H1 (cell line): ENCODE measurements at regions of chr13 and their contacts with region 1.

Region 1: DNA sequence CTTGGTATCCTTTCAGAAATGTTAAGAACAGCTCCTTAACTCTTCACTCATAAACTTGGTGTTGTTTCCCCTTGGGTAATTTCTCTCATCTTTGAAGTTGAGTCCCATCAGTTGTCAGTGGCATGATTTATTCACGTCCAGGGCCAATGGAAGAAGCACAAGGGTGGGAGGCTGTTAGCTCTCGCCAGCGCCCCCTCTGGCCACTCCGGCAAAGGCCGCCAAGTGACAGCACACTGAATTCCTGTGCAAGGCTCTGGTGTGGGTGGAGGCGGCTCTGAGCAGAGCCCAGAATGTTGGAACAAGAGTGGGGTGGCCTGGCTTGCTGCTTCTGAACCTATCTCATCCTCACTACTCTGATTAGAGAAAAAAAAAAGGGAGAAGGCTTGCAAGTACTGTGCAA is 13.1 kb upstream of the MEDAG start:
- DNase-seq: peak in 1 of 2 experiments; percentile 94
- H3K4me3 ChIP-seq: no peak overlapping the region
- H3K27ac ChIP-seq: no peak overlapping the region
- H3K4me1 ChIP-seq: peaks cover 0 to 3% (median 0%) of the 10 kb centered on the region in 4 experiments; a peak in 1 of 7 replicates
- H3K27me3 ChIP-seq: no peaks in the 10 kb centered on the region
- CTCF ChIP-seq: peak; percentile 75 to 94 (median 93)
- EP300 ChIP-seq: no peak
- POLR2A ChIP-seq: no peak
- RAD21 ChIP-seq: peak; percentile 47 to 59

Region 2: GRCh38 chr13:30880151-30880855 is 12.7 kb before region 1 on chr13:
- CTCF ChIA-PET with region 1: interaction called, 11 read pairs
- POLR2A ChIA-PET with region 1: no interaction called
- DNase-seq: no peak
- H3K4me3 ChIP-seq: no peak overlapping the region
- H3K27ac ChIP-seq: no peak overlapping the region
- H3K4me1 ChIP-seq: peaks cover 0 to 4% (median 0%) of the 10 kb centered on the region in 4 experiments; a peak in 1 of 7 replicates
- H3K27me3 ChIP-seq: no peaks in the 10 kb centered on the region
- CTCF ChIP-seq: no peak
- EP300 ChIP-seq: no peak
- POLR2A ChIP-seq: no peak
- RAD21 ChIP-seq: no peak

Region 3: DNA sequence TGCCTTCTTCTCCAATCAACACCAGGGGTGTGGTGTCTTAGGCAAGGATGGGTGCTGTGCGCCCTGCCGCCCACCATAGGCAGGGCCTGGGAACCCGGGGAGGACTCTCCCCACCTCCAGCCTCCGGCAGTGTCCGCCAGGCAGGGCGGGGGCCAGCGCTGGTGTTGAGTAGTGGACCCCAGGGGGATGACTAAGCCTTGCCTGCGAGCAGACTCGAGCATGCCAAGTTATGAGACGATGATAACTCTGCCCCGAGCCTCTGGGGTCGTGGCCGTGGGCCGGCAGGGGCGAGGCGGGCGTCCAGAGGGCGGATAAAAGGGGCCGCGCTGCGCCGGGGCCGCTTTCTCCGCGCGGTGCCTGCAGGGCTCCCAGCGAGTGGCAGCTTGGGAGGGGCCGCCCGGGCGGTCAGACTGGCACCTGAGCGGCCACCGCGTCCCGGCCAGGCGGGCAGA is 13.0 kb after region 1 on chr13 and contains the start of gene MEDAG:
- CTCF ChIA-PET with region 1: interaction called, 17 read pairs
- POLR2A ChIA-PET with region 1: no interaction called
- DNase-seq: no peak
- H3K4me3 ChIP-seq: peak within 1 kb of the TSS in 2 of 4 experiments; percentile 28 to 42; a peak in 3 of 8 replicates
- H3K27ac ChIP-seq: no peak within 1 kb of the TSS
- H3K4me1 ChIP-seq: no peaks in the 10 kb centered on the region
- H3K27me3 ChIP-seq: peaks cover 0 to 14% (median 1%) of the 10 kb centered on the region in 4 experiments; a peak in 3 of 7 replicates
- CTCF ChIP-seq: no peak
- EP300 ChIP-seq: no peak
- POLR2A ChIP-seq: no peak
- RAD21 ChIP-seq: no peak
- total RNA-seq, gene MEDAG: 1.6 and 2.1 TPM in 2 replicates

Region 4: DNA sequence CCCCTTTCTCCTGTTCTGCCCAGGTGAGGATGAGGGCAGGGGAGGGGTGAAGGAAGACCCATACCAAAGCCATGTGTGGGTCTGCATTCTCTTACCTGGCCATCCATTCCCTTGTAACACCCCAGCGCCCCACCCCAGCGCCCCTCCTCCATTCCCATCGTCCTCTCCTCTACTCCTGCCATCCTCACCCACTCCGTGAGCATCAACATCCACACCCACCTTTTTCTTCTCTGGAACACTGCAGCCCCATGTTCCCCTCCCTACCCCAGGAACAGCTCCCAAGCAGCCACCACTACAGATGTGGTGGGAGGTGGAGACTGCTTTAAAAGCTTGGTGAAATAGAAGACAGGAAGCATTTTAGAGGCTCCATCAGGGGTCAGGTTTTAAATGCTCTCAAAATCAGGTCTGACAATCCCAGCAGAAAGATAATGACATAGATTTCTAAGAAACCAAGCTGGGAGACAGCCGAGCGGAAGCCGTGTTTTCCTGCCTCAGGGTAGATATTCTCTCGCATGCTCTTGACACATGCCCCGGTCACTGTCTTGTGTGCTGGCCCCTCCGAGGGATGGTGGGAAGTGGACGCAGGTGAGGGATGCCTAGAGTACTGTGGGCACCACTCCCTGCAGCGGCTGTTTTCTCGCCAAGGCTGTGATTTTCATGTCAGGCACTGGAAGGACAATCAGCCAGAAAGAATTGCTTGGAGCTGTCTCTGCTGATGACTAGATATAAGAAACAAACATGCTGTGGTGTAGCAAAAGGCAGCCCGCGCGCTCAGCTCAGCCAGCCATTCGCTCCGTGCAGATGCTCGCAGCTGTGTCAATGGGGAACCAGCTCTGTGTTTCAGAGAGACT is 22.9 kb after region 1 on chr13:
- CTCF ChIA-PET with region 1: interaction called, 10 read pairs
- POLR2A ChIA-PET with region 1: no interaction called
- DNase-seq: no peak
- H3K4me3 ChIP-seq: no peak overlapping the region
- H3K27ac ChIP-seq: no peak overlapping the region
- H3K4me1 ChIP-seq: no peaks in the 10 kb centered on the region; a peak in 1 of 7 replicates
- H3K27me3 ChIP-seq: no peaks in the 10 kb centered on the region; a peak in 2 of 7 replicates
- CTCF ChIP-seq: no peak
- EP300 ChIP-seq: no peak
- POLR2A ChIP-seq: no peak
- RAD21 ChIP-seq: no peak

Region 5: DNA sequence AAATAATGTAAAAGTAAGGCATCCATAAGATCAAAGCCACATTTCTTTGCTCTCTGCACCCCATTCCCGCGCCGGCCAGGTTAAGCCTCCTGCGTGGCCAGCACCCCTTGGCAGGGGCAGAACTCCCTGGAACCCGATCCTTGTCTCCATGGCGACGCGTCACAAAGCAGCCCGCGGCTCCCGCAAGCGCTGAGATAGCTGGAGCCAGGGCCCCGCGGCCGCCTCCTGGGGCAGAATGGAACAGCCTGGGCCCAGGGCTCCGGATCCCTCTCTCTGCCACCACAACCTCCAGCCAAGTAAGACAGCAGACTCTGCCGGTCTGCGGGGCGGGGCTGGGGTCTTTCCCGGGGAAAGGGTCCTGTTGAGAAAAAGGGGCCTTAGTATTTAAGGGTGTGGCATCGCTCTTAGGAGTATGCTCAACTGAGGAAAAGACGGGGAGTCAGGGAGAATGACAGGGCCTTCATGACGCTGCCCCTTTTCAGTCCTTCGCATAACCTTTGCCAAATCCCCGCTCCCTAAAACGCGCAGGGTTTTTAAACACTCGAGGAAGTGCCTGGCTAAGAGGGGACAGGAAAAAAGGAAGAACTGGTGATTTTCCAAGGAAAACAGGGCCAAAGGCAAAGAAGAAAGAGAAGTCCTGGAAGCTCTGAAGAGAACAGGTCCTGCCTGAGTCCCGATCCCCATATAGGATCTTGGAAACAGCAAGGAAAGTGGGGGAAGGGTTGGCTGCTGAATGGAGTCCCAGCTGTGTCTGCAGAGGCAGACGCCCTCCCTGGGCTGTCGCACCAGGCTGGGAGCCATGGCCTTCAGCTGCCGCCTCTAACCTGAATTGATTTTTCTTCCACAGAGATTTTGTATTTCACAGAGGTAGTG is 39.8 kb after region 1 on chr13 and contains the start of gene TEX26:
- CTCF ChIA-PET with region 1: interaction called, 11 read pairs
- POLR2A ChIA-PET with region 1: no interaction called
- DNase-seq: peak; percentile 46 to 86
- H3K4me3 ChIP-seq: peak within 1 kb of the TSS; percentile 21 to 55 (median 33); a peak in 6 of 8 replicates
- H3K27ac ChIP-seq: no peak within 1 kb of the TSS
- H3K4me1 ChIP-seq: peaks cover 0 to 3% (median 3%) of the 10 kb centered on the region in 4 experiments; a peak in 3 of 7 replicates
- H3K27me3 ChIP-seq: peaks cover 2 to 9% (median 6%) of the 10 kb centered on the region in 4 experiments
- CTCF ChIP-seq: peak in 1 of 3 experiments; percentile 36; a peak in 1 of 4 replicates
- EP300 ChIP-seq: no peak
- POLR2A ChIP-seq: no peak
- RAD21 ChIP-seq: peak; percentile 29 to 58; a peak in 3 of 4 replicates
- total RNA-seq, gene TEX26: not detected in 2 replicates

Region 6: GRCh38 chr13:31105020-31105795 is 212.2 kb after region 1 on chr13:
- CTCF ChIA-PET with region 1: no interaction called
- POLR2A ChIA-PET with region 1: no interaction called
- DNase-seq: no peak
- H3K4me3 ChIP-seq: no peak overlapping the region
- H3K27ac ChIP-seq: no peak overlapping the region
- H3K4me1 ChIP-seq: no peaks in the 10 kb centered on the region
- H3K27me3 ChIP-seq: no peaks in the 10 kb centered on the region
- CTCF ChIP-seq: peak in 1 of 3 experiments; percentile 13; a peak in 1 of 4 replicates
- EP300 ChIP-seq: no peak
- POLR2A ChIP-seq: no peak
- RAD21 ChIP-seq: 0 out of 4 replicates have a peak, but pooled peaks of 1 of the 2 experiments have one; percentile 16